ENCODE measurements at regions of chr9 and their contacts with region 1.

Region 1: GRCh38 chr9:136482793-136483588 is at the start of gene SEC16A:
- DNase-seq: peak; percentile 97
- ATAC-seq: peak; percentile 82
- H3K4me3 ChIP-seq: peak within 1 kb of the TSS; percentile 92
- H3K27ac ChIP-seq: peak within 1 kb of the TSS; percentile 96
- H3K4me1 ChIP-seq: peaks cover 8% of the 10 kb centered on the region; the same call in 1 of the 2 replicates
- H3K27me3 ChIP-seq: no peaks in the 10 kb centered on the region; the same call in 1 of the 2 replicates
- CTCF ChIP-seq: no peak
- POLR2A ChIP-seq: peak; percentile 96
- RAD21 ChIP-seq: no peak
- total RNA-seq, gene SEC16A: 12.2 and 12.8 TPM in 2 replicates

Region 2: DNA sequence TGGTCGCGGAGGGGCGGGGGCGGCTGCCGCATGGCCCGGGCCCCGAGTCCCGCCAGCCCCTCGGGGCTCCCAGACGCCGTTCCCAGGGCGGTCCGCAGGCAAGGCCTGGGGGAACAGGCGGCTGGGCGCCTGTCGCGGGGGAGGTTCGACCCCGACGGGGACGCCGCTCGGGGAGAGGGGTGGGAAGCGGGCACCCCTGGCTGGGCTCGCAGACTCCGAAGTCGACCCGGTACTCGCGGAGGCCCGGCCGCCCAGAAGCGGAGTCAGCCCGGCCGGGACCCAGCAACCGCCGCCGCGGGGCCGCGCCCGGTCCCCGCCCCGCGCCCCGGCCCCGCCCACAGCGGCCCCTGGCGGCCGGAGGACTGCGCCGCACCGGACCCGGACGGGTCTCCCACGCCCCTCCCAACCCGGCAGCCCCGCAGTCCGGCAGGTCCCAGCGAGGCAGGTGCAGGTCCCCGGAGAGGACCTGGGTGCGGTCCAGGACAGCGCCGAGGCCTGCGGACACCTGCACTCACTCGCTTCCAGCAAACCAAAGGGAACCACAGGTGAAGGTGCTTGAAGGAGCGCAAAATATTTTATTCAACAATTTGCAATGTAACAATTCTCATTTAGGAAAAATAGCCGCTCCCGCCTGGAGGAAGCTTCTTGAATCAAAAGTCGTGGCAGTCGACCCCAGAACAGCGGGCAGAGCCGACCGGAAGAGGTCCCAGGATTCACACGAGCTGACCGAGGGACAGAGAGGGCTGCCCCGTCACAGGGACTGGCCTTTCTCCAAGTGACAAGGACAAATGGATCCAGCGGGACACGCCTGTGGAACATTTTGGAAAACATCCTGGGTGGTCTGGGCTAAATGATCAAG is 43.2 kb before region 1 on chr9 and contains the start of gene INPP5E:
- CTCF ChIA-PET with region 1: no interaction called
- POLR2A ChIA-PET with region 1: no interaction called
- dilution Hi-C with region 1: no loop called
- in situ Hi-C with region 1: no loop called
- intact Hi-C with region 1: loop called (anchors 2 kb)
- DNase-seq: peak; percentile 56
- ATAC-seq: peak; percentile 83
- H3K4me3 ChIP-seq: peak within 1 kb of the TSS; percentile 90
- H3K27ac ChIP-seq: peak within 1 kb of the TSS; percentile 73
- H3K4me1 ChIP-seq: peaks cover 7% of the 10 kb centered on the region
- H3K27me3 ChIP-seq: no peaks in the 10 kb centered on the region
- CTCF ChIP-seq: peak; percentile 67
- POLR2A ChIP-seq: peak; percentile 62; the same call in 1 of the 2 replicates
- RAD21 ChIP-seq: no peak
- total RNA-seq, gene INPP5E: 1.6 and 1.9 TPM in 2 replicates

Region 3: DNA sequence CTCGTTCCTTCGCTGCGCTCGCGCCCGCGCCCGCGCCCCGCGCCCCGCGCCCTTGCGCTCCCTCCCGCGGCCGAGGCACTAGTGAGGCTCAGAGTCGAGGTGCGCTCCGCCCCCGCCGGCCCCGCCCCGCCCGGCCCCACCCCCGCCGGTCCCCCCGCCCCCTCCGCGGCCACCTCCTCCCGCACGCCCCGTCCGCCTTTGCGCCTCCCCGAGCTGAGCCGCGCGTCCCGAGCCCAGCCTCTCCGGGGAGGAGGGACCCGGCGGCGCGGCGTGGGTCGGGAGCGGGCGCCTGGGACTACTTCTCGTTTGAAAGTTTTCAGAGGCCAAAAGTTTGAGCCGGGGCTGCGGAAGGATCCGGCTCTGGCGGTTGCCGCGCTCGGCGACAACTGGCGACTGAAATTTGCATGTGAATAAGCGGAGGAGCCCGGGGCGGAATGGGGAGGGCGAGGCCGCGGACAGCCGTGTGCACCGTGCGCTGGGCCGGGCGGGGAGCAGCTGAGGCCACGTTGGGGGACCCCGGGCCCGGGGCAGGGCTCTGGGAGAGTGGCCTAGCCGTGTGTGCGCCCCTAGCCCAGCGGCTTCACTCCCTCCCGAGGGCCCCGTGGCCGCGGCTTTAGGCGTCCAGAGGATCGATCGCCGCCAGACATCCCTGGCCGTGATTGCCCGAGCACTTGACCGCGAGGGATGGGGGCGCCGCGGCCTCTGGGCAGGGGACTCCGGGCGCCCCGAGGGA is 63.1 kb after region 1 on chr9 and contains the start of gene NOTCH1:
- CTCF ChIA-PET with region 1: no interaction called
- POLR2A ChIA-PET with region 1: no interaction called
- dilution Hi-C with region 1: no loop called
- in situ Hi-C with region 1: no loop called
- intact Hi-C with region 1: loop called (anchors 2 kb)
- DNase-seq: peak; percentile 87
- ATAC-seq: peak; percentile 85
- H3K4me3 ChIP-seq: peak within 1 kb of the TSS; percentile 82
- H3K27ac ChIP-seq: peak within 1 kb of the TSS; percentile 76
- H3K4me1 ChIP-seq: peaks cover 30% of the 10 kb centered on the region
- H3K27me3 ChIP-seq: no peaks in the 10 kb centered on the region
- CTCF ChIP-seq: no peak
- POLR2A ChIP-seq: no peak
- RAD21 ChIP-seq: no peak
- total RNA-seq, gene NOTCH1: 1.8 and 2.5 TPM in 2 replicates

Region 4: DNA sequence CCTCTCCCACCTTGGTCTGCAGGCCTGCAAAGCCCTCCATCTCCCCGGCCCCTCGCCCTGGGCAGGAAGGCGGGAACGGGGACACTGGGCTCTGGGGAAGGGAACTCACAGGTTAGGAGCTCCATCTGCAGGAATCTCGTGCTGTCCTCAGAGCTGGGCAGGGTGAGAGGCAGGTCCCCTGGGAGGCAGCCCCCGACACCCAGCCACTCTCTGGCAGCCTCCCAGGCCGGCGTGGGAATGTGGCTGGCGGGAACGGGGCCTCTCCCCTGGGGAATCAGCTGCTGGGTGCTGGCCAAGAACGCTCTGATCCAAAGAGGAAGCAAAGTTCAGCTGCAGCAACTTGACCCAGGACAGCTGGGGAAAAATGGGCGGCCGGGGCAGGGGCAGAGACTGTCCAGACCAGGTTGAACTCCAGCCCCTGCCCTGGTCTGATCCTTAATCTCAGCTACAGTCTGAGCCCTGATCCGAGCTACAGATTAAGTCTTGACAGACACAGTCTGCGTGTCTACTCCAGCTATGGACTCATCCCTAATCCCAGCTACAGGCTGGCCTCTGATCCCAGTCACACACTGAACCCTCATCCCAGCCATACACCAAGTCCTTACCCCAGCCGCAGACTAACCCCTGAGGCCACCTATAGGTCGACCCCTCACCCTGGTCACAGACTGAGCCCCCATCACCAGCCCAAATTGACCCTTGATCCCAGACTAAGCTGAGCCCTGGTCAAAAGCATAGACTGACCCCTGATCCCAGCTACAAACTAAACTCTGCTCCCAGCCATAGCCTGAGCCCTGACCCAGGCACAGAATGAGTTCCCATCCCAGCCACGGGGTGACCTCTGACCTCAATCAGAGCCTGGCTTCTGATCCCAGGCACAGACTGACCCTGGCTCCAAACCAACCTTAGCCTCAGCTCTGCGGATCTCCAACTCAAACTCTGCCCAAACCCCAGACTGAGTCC is 142.4 kb after region 1 on chr9:
- CTCF ChIA-PET with region 1: interaction called, 16 read pairs
- POLR2A ChIA-PET with region 1: no interaction called
- dilution Hi-C with region 1: no loop called
- in situ Hi-C with region 1: no loop called
- intact Hi-C with region 1: loop called (anchors 1 kb)
- DNase-seq: peak; percentile 31
- ATAC-seq: peak; percentile 73
- H3K4me3 ChIP-seq: no peak overlapping the region
- H3K27ac ChIP-seq: no peak overlapping the region
- H3K4me1 ChIP-seq: peaks cover 7% of the 10 kb centered on the region; the same call in 1 of the 2 replicates
- H3K27me3 ChIP-seq: no peaks in the 10 kb centered on the region; the same call in 1 of the 2 replicates
- CTCF ChIP-seq: peak; percentile 59
- POLR2A ChIP-seq: no peak
- RAD21 ChIP-seq: peak; percentile 75

Region 5: GRCh38 chr9:136631038-136632000 is 148.3 kb after region 1 on chr9:
- CTCF ChIA-PET with region 1: interaction called, 16 read pairs
- POLR2A ChIA-PET with region 1: no interaction called
- dilution Hi-C with region 1: no loop called
- in situ Hi-C with region 1: no loop called
- intact Hi-C with region 1: loop called (anchors 1 kb)
- DNase-seq: peak; percentile 76
- ATAC-seq: peak; percentile 91
- H3K4me3 ChIP-seq: no peak overlapping the region
- H3K27ac ChIP-seq: no peak overlapping the region
- H3K4me1 ChIP-seq: no peaks in the 10 kb centered on the region
- H3K27me3 ChIP-seq: peaks cover 11% of the 10 kb centered on the region
- CTCF ChIP-seq: peak; percentile 91
- POLR2A ChIP-seq: 0 out of 2 replicates have a peak, but pooled peaks have one; percentile 30
- RAD21 ChIP-seq: peak; percentile 97

Measured in IMR-90 (cell line).